Spleen (tissue), 13 donors: ENCODE measurements at regions of chr17 and their contacts with region 1.

Region 1: DNA sequence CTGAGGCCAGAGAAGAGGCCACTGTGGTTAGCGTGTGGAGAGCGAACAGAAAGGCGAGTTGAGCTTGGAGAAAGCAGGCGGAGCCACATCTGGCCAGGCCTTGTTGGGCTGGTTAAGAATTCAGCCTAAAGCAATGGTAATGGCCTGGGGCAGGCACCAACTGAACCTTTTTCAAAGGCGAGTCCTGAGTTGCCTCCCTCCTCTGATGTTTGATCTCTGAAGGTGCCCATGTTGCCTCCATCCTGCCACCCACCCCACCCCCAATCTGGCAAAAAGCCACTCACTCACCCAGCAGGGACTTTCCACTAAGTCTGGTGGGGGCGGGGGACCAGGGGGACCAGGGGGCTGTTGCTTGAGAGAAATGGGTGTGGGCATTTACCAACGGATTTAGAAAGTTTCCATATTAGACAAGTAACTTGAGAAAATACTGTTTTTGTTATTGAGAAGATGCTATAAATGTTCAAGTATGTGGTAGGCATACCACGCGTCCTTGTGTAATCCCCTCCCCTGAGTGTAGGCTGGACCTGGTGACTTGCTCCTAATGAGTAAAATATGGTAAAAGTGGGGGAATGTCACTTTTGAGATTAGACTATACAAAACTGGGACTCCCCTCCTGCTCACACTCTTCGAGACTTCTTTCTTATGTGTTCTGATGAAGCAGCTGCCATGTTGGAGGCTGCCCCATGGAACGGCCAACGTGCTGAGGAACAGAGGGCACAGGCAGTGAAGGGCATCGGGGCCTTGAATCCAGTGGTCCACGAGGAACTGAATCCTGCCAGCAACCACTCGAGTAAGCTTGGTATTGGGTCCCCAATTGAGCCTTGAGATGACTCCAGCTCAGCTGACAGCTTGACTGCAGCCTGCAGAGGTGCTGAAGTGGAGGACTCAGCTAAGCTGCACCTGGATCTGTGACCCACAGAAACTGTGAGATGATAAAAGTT is 29.9 kb upstream of the TNS4 start:
- DNase-seq: peak; percentile 71
- H3K4me3 ChIP-seq: no peak overlapping the region
- H3K27ac ChIP-seq: no peak overlapping the region
- H3K4me1 ChIP-seq: peaks cover 19 to 82% (median 56%) of the 10 kb centered on the region in 6 donors
- H3K27me3 ChIP-seq: no peaks in the 10 kb centered on the region
- CTCF ChIP-seq: no peak
- POLR2A ChIP-seq: no peak

Region 2: DNA sequence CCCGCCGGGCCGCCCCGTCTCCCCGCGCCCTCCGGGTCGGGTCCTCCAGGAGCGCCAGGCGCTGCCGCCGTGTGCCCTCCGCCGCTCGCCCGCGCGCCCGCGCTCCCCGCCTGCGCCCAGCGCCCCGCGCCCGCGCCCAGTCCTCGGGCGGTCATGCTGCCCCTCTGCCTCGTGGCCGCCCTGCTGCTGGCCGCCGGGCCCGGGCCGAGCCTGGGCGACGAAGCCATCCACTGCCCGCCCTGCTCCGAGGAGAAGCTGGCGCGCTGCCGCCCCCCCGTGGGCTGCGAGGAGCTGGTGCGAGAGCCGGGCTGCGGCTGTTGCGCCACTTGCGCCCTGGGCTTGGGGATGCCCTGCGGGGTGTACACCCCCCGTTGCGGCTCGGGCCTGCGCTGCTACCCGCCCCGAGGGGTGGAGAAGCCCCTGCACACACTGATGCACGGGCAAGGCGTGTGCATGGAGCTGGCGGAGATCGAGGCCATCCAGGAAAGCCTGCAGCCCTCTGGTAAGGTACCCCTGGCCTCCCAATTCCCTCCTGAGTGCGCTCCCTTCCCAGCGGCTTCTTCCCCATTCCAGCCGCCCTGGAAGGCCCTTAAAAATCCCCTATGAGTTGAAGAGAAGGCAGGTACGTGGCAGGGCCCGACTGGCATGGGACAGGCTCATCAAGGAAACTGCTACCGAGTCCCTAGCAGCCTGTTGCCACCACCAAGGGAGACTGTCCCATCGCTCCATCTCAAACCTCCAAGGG is 87.6 kb before region 1 on chr17:
- intact Hi-C with region 1: loop called (anchors 5 kb)
- DNase-seq: peak; percentile 95
- H3K4me3 ChIP-seq: peak overlapping the region; percentile 67 to 92 (median 75)
- H3K27ac ChIP-seq: peak overlapping the region; percentile 68 to 90 (median 86)
- H3K4me1 ChIP-seq: peaks cover 23 to 73% (median 63%) of the 10 kb centered on the region in 6 donors
- H3K27me3 ChIP-seq: peaks cover 0 to 26% (median 3%) of the 10 kb centered on the region in 7 donors
- CTCF ChIP-seq: peak in 9 of 11 experiments; percentile 16 to 63 (median 38)
- POLR2A ChIP-seq: no peak

Region 3: DNA sequence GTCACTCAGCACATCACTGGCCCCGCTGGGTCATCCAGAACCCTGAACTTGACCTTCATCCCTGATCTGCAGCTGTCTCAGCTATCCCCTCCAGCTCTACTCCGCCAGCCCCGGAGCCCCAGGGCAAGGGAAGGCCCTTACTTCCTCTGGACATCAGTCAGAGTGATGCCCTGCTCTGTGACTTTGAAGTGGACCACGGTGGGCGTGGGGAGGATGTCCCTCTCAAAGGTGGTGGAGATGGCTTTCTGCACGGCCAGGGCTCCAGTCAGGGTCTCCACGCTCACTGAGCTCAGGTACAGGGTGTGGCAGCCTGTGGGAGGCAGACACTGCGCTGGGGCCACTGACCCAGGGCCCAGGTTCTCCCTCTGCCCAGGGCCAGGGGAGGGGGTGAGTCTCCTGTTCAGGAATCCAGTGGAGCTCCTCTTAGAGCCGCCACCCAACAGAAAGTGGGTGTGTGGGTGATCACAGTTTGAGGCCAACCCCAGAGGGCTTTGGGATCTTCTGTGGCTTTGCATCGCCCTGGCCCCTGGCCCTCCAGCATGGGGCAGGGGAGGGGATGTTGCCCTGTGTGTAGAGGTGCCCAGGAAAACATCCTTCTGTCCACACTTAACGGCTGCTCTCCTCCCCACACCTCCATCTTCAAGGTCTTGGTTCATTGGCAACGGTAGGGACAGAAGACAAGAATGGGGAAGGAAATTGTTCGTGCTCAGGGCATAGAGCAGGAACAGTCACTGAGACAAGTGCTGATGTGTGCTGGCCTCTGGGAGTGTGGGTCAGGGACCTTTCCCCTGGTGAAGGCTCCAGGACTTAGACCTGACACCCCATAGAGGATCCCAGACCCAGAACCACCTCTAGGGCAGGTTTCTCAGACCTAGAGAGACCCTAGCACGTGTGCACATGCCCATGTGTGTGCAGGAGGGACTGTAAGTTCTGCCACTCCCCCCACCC is 51.5 kb before region 1 on chr17:
- intact Hi-C with region 1: loop called (anchors 10 kb)
- DNase-seq: peak; percentile 74
- H3K4me3 ChIP-seq: peak overlapping the region in 1 of 8 donors; percentile 27
- H3K27ac ChIP-seq: peak overlapping the region in 6 of 8 donors; percentile 51 to 82 (median 67)
- H3K4me1 ChIP-seq: peaks cover 21 to 67% (median 36%) of the 10 kb centered on the region in 6 donors
- H3K27me3 ChIP-seq: no peaks in the 10 kb centered on the region
- CTCF ChIP-seq: no peak
- POLR2A ChIP-seq: no peak